ENCODE measurements at regions of chr1 and their contacts with region 1.

Region 1: DNA sequence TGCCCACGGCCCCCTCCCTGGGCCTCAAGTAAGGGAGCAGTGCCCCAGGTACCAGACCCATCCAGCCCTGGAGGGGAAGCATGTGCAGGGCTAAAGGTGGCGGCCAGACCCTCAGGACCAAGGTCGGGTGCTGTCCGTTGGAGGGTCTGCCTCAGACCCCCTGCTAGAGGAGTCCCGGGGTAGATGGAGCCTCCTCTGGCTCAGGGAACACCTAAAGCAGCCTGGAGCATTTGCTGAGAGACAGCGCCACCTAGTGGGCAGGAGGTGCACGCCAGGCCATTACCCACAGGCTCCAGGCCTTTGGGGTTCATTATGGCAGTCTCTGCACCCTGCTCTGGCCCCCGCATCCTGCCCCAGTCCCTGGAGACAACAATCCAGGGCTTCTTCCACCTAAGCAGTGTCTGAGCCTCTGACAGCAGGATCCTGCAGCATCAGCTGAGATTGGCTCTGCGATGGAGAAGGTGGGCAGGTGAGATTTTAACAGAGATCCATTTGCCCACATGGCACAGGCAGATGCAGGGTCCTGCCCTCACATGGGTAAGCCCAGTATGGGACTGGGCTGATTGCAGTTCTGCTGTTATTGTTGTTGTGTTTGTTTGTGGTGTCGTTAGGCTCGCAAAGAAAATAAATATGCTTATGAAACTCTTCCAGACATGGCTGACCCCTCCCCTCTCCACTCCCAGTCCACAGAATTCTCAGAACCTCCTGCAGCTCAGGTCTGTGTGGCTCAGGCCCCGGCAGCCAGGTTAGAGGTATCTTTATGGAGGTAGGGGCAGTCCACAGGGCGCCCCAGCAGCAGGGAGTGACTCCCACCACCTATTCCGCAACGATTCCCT is 42.4 kb downstream of the CTNNBIP1 start:
- DNase-seq: peak; percentile 88 to 92
- H3K4me3 ChIP-seq: no peak overlapping the region
- H3K27ac ChIP-seq: no peak overlapping the region
- H3K4me1 ChIP-seq: peaks cover 0 to 5% (median 0%) of the 10 kb centered on the region in 4 donors
- H3K27me3 ChIP-seq: no peaks in the 10 kb centered on the region
- CTCF ChIP-seq: peak in 5 of 7 experiments; percentile 92 to 99 (median 96)
- EP300 ChIP-seq: no peak
- POLR2A ChIP-seq: no peak

Region 2: GRCh38 chr1:9629445-9630201 is 238.0 kb before region 1 on chr1:
- intact Hi-C with region 1: loop called (anchors 5 kb)
- DNase-seq: peak; percentile 46 to 65
- H3K4me3 ChIP-seq: peak overlapping the region; percentile 4 to 26 (median 14)
- H3K27ac ChIP-seq: peak overlapping the region; percentile 11 to 79 (median 58)
- H3K4me1 ChIP-seq: peaks cover 0 to 27% (median 15%) of the 10 kb centered on the region in 4 donors
- H3K27me3 ChIP-seq: peaks cover 0 to 19% (median 13%) of the 10 kb centered on the region in 3 donors
- CTCF ChIP-seq: no peak
- EP300 ChIP-seq: no peak
- POLR2A ChIP-seq: no peak

Region 3: DNA sequence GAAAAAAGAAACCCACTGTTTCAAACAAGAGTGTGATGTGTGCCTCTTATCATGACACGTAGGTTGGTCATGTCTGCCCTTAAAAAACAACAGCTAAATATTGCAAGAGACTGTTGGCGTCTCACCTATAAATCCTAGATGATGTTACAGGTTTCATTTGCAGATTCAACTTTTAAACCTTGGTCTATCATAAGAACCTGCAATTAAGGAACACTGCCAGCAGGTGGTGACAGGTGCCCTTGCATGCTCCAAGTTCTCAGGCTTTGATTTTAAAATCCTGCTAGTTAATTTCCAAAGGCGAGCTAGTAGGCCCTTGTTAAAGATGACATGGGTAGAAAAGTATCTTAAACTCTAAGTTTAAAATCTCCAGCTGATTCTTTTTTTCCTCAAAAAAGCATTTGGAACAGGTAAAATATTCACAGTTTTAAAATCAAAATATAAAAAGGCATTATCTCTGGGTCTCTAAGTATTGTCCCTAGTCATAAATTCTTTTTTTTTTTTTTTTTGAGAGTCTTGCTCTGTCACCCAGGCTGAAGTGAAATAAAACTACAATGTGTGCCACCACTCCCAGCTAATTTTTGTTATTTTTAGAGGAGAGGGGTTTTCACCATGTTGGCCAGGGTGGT is 83.0 kb before region 1 on chr1:
- intact Hi-C with region 1: loop called (anchors 5 kb)
- DNase-seq: peak; percentile 69 to 83
- H3K4me3 ChIP-seq: no peak overlapping the region
- H3K27ac ChIP-seq: no peak overlapping the region
- H3K4me1 ChIP-seq: peaks cover 0 to 16% (median 3%) of the 10 kb centered on the region in 4 donors
- H3K27me3 ChIP-seq: no peaks in the 10 kb centered on the region
- CTCF ChIP-seq: peak in 5 of 7 experiments; percentile 54 to 83 (median 61)
- EP300 ChIP-seq: no peak
- POLR2A ChIP-seq: no peak

Region 4: GRCh38 chr1:10057343-10057742 is 189.7 kb after region 1 on chr1:
- intact Hi-C with region 1: no loop called
- DNase-seq: no peak
- H3K4me3 ChIP-seq: no peak overlapping the region
- H3K27ac ChIP-seq: peak overlapping the region in 2 of 5 donors; percentile 2 to 36
- H3K4me1 ChIP-seq: peaks cover 16 to 49% (median 35%) of the 10 kb centered on the region in 4 donors
- H3K27me3 ChIP-seq: no peaks in the 10 kb centered on the region
- CTCF ChIP-seq: no peak
- EP300 ChIP-seq: no peak
- POLR2A ChIP-seq: no peak